HepG2 (cell line): ENCODE measurements at regions of chr1 and their contacts with region 1.

Region 1: GRCh38 chr1:31189696-31190674 is 49.7 kb downstream of the NKAIN1 start:
- DNase-seq: no peak
- ATAC-seq: no peak
- H3K4me3 ChIP-seq: no peak overlapping the region
- H3K27ac ChIP-seq: no peak overlapping the region
- H3K4me1 ChIP-seq: no peaks in the 10 kb centered on the region
- H3K27me3 ChIP-seq: peaks cover 0 to 17% of the 10 kb centered on the region in 2 experiments; a peak in 2 of 5 replicates
- CTCF ChIP-seq: no peak
- EP300 ChIP-seq: no peak
- POLR2A ChIP-seq: no peak
- RAD21 ChIP-seq: no peak

Region 2: DNA sequence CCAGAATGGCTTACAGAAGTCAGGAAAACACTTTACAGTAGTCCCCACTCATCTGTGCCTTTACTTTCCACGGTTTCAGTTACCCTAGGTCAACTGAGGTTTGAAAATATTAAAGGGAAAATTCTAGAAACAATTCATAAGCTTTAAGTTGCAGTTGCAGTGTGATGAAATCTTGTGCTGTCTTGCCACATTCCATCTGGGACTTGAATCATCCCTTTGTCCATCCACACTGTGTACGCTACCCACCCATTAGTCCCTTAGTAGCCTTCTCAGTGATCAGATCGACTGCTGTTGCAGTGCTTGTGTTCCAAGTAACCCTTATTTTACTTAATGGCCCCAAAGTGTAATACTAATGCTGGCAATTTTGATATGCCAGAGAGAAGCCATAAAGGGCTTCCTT is 137.4 kb after region 1 on chr1:
- CTCF ChIA-PET with region 1: interaction called, 4 read pairs
- POLR2A ChIA-PET with region 1: no interaction called
- in situ Hi-C with region 1: loop called (anchors 5 kb)
- intact Hi-C with region 1: no loop called
- DNase-seq: no peak
- ATAC-seq: no peak
- H3K4me3 ChIP-seq: no peak overlapping the region
- H3K27ac ChIP-seq: no peak overlapping the region
- H3K4me1 ChIP-seq: no peaks in the 10 kb centered on the region
- H3K27me3 ChIP-seq: no peaks in the 10 kb centered on the region
- CTCF ChIP-seq: no peak
- EP300 ChIP-seq: no peak
- POLR2A ChIP-seq: no peak
- RAD21 ChIP-seq: no peak